ENCODE measurements at regions of chr1 and their contacts with region 1.

Region 1: DNA sequence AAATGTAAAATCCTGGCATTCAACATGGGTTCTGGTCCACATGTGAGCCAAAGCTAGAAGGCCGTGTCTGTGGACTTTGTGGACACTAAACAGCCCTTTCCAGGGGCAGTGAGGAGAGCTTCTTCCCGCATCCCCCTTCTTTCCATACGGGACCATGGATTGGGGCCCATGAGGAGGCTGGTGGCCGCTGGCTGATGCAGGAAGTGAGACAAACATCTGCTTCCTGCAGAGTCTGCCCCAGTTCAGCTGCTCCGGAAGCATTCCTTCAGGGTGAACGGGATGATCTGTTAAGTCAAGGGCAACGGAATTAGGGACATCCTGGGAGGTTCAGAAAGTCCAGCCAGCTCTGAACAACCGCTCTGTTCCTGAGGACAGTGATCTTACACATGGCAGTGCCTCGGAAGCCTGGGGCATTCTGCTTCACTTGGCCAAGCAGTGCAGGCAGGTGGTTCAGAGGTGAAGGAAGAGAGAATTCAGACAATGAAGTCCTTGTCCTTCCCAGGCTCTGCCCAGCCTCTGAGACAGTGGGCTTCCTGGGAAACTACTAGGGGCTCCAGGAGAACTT is 1.5 kb downstream of the CA6 start:
- DNase-seq: peak; percentile 66
- H3K4me3 Mint-ChIP-seq: peak overlapping the region; percentile 50
- H3K27ac Mint-ChIP-seq: peak overlapping the region; percentile 93
- H3K4me1 Mint-ChIP-seq: peaks cover 65% of the 10 kb centered on the region
- H3K27me3 Mint-ChIP-seq: no peaks in the 10 kb centered on the region

Region 2: GRCh38 chr1:8962812-8963530 is 15.8 kb after region 1 on chr1:
- CTCF ChIA-PET with region 1: interaction called, 19 read pairs
- intact Hi-C with region 1: loop called (anchors 1 kb)
- DNase-seq: peak; percentile 66
- H3K4me3 Mint-ChIP-seq: peak overlapping the region; percentile 39
- H3K27ac Mint-ChIP-seq: peak overlapping the region; percentile 84
- H3K4me1 Mint-ChIP-seq: peaks cover 87% of the 10 kb centered on the region
- H3K27me3 Mint-ChIP-seq: no peaks in the 10 kb centered on the region

Region 3: GRCh38 chr1:9588551-9589143 is 641.4 kb after region 1 on chr1 and contains the start of gene TMEM201:
- CTCF ChIA-PET with region 1: no interaction called
- intact Hi-C with region 1: no loop called
- DNase-seq: peak; percentile 92
- H3K4me3 Mint-ChIP-seq: peak within 1 kb of the TSS; percentile 78
- H3K27ac Mint-ChIP-seq: no peak within 1 kb of the TSS
- H3K4me1 Mint-ChIP-seq: peaks cover 38% of the 10 kb centered on the region
- H3K27me3 Mint-ChIP-seq: no peaks in the 10 kb centered on the region
- total RNA-seq, gene TMEM201: 9.1 to 9.8 TPM